ENCODE measurements at regions of chr15 and their contacts with region 1.

Region 1: DNA sequence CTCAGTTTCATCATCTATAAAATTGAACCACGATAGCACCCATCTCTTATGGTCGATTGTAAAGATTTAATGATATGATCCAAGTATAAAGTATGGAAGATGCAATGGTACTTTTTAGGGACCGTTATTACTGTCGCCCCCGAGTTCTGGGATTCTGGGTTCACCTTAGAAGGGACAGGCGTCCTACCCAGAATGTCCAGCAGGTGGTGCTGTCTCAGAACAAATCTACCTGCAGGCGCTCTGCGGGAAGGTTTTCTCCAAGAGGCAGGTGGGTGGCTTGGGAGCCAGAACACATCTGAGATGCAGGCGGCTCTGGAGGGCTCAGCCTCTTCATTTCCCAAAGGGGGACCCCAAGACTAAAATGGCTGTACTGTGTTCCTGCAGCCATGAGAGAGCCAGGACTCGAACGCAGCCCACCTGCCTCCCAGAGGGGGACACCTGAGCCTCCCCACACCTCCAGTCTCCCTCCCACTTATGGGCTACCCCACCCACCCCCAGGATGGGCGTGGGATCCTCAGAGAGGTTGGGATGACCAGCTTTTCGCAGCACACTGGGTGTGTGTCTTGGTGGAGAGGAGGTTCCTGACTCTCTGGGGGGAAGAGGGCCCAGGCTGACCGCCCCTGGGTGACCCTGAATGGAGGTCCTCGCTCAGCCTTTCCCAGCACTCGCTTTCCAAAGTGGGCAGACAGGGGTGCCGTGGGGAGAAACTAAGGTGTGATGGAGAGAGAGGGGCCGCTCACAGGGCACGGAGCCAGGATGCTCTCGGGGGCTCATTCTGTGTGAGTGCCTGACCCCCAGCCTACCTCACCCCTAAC is 28.1 kb upstream of the CORO2B start:
- DNase-seq: peak; percentile 41
- H3K4me3 ChIP-seq: no peak overlapping the region
- H3K27ac ChIP-seq: no peak overlapping the region
- H3K4me1 ChIP-seq: peaks cover 8% of the 10 kb centered on the region
- H3K27me3 ChIP-seq: peaks cover 5% of the 10 kb centered on the region in 2 experiments
- CTCF ChIP-seq: peak; percentile 80 to 87
- POLR2A ChIP-seq: no peak

Region 2: DNA sequence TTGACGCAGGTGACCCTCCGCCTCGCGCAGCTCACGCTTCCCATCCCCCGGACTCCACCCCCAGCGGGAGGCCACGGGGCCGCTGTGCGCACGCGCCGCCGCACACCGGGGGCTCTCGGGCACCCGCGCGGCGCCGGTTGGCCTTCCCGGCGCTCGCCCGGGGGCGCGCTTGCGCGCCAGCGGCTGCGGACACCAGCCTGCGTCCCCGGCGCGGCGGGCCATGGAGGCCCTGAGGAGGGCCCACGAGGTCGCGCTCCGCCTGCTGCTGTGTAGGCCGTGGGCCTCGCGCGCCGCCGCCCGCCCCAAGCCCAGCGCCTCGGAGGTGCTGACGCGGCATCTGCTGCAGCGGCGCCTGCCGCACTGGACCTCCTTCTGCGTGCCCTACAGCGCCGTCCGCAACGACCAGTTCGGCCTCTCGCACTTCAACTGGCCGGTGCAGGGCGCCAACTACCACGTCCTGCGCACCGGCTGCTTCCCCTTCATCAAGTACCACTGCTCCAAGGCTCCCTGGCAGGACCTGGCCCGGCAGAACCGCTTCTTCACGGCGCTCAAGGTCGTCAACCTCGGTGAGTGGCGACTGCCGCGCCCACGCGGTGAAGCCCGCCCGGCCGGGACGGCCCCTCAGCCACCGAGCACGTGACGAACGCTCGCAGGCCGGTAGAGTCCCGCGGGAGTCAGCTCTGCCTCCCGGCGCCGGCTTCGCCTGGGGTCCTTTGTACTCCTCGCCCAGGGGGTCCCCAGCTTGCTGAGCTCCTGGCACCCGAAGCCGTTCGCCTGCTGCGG is 1029.5 kb before region 1 on chr15 and contains the start of gene C15orf61:
- CTCF ChIA-PET with region 1: no interaction called
- POLR2A ChIA-PET with region 1: no interaction called
- dilution Hi-C with region 1: no loop called
- intact Hi-C with region 1: no loop called
- DNase-seq: peak; percentile 84
- H3K4me3 ChIP-seq: peak within 1 kb of the TSS; percentile 77 to 95 (median 81)
- H3K27ac ChIP-seq: peak within 1 kb of the TSS; percentile 63
- H3K4me1 ChIP-seq: peaks cover 17% of the 10 kb centered on the region
- H3K27me3 ChIP-seq: no peaks in the 10 kb centered on the region
- CTCF ChIP-seq: no peak
- POLR2A ChIP-seq: peak; percentile 34
- total RNA-seq, gene C15orf61: 3.7 and 4.1 TPM in 2 replicates

Region 3: DNA sequence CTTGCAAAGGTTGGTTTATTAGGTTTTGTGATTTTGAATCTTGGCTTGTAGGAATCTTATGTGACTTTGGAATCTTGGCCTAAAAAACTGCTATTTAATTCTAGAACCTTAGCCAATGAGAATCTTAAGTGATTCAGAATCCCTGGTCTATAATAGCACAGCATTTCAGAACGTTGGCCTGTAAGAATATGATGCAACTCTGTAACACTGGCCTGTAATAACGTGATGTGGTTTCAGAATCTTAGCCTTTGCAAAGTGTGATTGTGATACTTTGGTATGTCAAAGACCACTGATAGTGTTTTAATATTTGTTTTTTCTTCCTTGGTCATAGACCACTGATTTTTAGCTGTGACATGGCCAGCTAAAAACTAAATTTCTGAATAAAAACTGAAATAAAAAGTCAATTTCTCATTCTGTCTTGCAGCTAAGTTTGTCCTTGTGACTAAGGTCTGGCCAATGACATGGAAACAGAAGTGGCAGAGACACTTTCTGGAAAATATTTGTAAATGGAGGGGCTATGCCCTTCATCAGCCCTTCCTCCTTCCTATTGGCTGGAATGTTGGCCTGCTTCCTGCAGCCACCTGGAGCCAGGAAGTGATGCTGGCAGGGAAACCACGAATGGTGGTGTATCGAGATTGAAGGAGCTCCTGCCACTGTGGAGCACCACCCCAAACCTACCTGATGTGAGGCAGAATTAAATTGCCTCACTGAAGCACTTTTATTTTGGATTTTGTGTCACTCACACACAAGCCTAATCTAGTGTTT is 14.2 kb before region 1 on chr15:
- CTCF ChIA-PET with region 1: interaction called, 10 read pairs
- POLR2A ChIA-PET with region 1: no interaction called
- dilution Hi-C with region 1: no loop called
- intact Hi-C with region 1: no loop called
- DNase-seq: no peak
- H3K4me3 ChIP-seq: no peak overlapping the region
- H3K27ac ChIP-seq: no peak overlapping the region
- H3K4me1 ChIP-seq: no peaks in the 10 kb centered on the region
- H3K27me3 ChIP-seq: no peaks in the 10 kb centered on the region
- CTCF ChIP-seq: no peak
- POLR2A ChIP-seq: no peak

Region 4: DNA sequence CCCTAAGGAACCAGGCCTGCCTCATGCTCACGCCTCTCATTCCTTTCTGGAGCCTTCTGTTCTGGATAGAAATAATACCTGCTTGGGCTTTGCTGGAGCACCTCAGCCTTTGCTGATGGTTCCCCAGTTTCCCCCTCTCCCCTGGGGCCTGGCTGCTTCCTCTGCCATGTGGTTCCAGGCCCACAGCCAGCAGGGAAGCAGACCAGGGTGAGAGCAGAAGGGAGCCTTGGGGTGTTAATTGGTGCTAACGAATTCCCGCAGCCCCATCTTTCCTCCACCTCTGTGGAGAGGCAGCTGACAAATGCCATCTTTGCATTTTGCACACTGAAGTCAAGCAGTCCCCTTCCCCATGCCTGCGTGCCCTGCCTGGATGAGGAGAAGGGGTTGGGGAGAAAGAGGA is 15.0 kb after region 1 on chr15:
- CTCF ChIA-PET with region 1: interaction called, 29 read pairs
- POLR2A ChIA-PET with region 1: no interaction called
- dilution Hi-C with region 1: no loop called
- intact Hi-C with region 1: no loop called
- DNase-seq: no peak
- H3K4me3 ChIP-seq: no peak overlapping the region
- H3K27ac ChIP-seq: no peak overlapping the region
- H3K4me1 ChIP-seq: no peaks in the 10 kb centered on the region
- H3K27me3 ChIP-seq: peaks cover 23 to 35% of the 10 kb centered on the region in 2 experiments
- CTCF ChIP-seq: no peak
- POLR2A ChIP-seq: no peak

Region 5: GRCh38 chr15:68650901-68651709 is 100.4 kb after region 1 on chr15:
- CTCF ChIA-PET with region 1: interaction called, 17 read pairs
- POLR2A ChIA-PET with region 1: no interaction called
- dilution Hi-C with region 1: no loop called
- intact Hi-C with region 1: no loop called
- DNase-seq: peak; percentile 45
- H3K4me3 ChIP-seq: no peak overlapping the region
- H3K27ac ChIP-seq: no peak overlapping the region
- H3K4me1 ChIP-seq: no peaks in the 10 kb centered on the region
- H3K27me3 ChIP-seq: peaks cover 0 to 4% of the 10 kb centered on the region in 2 experiments
- CTCF ChIP-seq: peak; percentile 93 to 96
- POLR2A ChIP-seq: no peak

Region 6: DNA sequence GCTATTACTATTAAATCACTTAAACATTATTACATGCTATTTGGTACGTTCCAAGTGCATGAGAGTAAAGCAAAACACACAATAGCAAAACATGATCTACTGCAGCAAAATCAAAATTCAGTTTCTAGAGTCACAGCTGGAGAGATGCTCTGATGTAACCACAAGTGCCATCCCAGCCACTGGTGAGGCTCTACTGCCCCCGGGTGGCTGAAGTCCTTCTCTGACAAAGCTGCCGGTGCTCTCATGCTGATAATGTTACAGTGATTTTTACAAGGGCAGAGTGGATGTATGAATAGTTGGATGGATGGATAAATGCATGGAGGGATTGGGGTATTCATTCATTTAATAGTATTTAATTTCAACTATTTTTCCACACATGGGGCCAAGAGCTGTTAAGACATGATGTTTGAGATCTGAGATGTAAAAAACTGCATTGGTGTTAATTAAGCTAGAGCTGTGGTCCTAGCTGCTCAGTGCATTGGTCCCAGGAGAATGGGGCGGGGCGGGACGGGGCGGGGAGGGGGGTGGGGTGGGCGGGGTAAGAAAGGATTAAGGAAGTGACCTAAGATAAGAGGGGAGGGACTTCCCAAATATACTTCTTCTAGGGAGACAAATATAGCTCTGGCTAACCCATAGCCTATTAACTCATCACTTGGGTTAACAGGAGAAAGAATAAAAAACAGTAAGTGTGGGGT is 374.3 kb after region 1 on chr15:
- CTCF ChIA-PET with region 1: interaction called, 62 read pairs
- POLR2A ChIA-PET with region 1: no interaction called
- dilution Hi-C with region 1: no loop called
- intact Hi-C with region 1: loop called (anchors 1 kb)
- DNase-seq: peak; percentile 75
- H3K4me3 ChIP-seq: no peak overlapping the region
- H3K27ac ChIP-seq: no peak overlapping the region
- H3K4me1 ChIP-seq: no peaks in the 10 kb centered on the region
- H3K27me3 ChIP-seq: peaks cover 5 to 37% of the 10 kb centered on the region in 2 experiments
- CTCF ChIP-seq: peak; percentile 72 to 78
- POLR2A ChIP-seq: no peak

Measured in endothelial cell of umbilical vein (primary cell).